Right lobe of liver (tissue), 6 donors: ENCODE measurements at regions of chr7 and their contacts with region 1.

Region 1: GRCh38 chr7:98106647-98107445 is at the start of gene LMTK2:
- DNase-seq: peak; percentile 95 to 96 (median 96)
- ATAC-seq: peak; percentile 98 to 100 (median 99)
- H3K4me3 ChIP-seq: peak within 1 kb of the TSS; percentile 97 to 98 (median 98)
- H3K27ac ChIP-seq: peak within 1 kb of the TSS; percentile 67 to 81 (median 77)
- H3K4me1 ChIP-seq: peaks cover 0 to 29% (median 12%) of the 10 kb centered on the region in 4 donors
- H3K27me3 ChIP-seq: no peaks in the 10 kb centered on the region
- CTCF ChIP-seq: peak; percentile 95 to 98 (median 96)
- POLR2A ChIP-seq: peak; percentile 90
- total RNA-seq, gene LMTK2: 9.4 to 16.7 (median 13.9) TPM

Region 2: DNA sequence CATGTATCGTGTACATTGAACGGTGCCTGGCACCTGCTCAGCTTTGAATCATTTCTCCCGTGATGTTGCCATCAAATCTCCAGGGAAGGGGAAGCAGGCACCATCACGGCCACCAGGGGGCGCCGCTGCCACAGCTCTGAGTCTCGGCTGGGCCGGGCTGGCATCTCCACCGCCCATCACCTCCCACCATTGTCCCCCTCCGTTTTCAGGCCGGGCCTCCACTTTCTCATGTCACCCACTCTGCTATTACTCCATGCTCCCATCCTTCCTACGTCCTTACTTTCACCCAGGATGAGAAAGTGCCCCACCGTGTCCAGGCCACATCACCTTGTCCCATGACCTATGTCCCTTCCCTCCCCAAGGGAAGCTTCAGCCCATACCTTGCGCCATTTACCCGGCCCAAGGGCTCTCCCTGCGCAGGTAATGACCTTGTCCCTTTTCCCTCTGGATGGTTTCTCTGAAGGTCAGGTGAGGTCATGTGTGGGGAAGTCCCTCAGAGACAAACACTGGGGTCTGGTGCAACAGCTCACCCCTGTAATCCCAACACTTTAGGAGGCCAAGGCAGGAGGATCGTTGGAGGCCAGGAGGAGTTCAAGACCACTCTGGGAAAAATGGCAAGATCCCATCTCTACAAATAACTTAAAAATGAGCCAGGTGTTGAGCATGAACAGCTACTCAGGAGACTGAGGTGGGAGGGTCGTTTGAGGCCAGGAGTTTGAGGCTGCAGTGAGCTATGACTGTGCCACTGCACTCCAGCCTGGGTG is 85.1 kb before region 1 on chr7:
- intact Hi-C with region 1: loop called in 1 of 2 experiments (anchors 10 kb)
- DNase-seq: peak; percentile 77 to 81 (median 80)
- ATAC-seq: peak; percentile 93 to 99 (median 97)
- H3K4me3 ChIP-seq: no peak overlapping the region
- H3K27ac ChIP-seq: no peak overlapping the region
- H3K4me1 ChIP-seq: no peaks in the 10 kb centered on the region
- H3K27me3 ChIP-seq: no peaks in the 10 kb centered on the region
- CTCF ChIP-seq: peak; percentile 87 to 98 (median 96)
- POLR2A ChIP-seq: no peak

Region 3: DNA sequence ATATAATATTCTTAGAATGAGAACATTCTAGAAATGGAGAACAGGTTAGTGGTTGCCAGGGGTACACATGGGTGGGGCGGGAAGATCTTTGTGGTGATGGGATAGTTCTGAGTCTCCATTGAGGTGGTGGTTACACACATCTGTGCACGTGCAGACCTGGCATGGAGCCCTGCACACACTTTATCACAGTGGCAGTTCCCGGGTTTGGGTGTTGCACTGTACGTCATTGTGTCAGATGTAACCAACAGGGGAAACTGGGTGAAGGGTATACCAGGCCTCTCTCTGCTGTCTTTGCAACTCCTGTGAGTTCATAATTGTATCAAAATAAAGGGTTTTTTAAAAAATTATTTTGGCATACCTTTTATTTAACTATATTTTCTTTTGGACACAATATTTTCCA is 50.9 kb after region 1 on chr7:
- intact Hi-C with region 1: loop called in 1 of 2 experiments (anchors 10 kb)
- DNase-seq: no peak
- ATAC-seq: no peak
- H3K4me3 ChIP-seq: no peak overlapping the region
- H3K27ac ChIP-seq: no peak overlapping the region
- H3K4me1 ChIP-seq: no peaks in the 10 kb centered on the region
- H3K27me3 ChIP-seq: no peaks in the 10 kb centered on the region
- CTCF ChIP-seq: no peak
- POLR2A ChIP-seq: no peak

Region 4: DNA sequence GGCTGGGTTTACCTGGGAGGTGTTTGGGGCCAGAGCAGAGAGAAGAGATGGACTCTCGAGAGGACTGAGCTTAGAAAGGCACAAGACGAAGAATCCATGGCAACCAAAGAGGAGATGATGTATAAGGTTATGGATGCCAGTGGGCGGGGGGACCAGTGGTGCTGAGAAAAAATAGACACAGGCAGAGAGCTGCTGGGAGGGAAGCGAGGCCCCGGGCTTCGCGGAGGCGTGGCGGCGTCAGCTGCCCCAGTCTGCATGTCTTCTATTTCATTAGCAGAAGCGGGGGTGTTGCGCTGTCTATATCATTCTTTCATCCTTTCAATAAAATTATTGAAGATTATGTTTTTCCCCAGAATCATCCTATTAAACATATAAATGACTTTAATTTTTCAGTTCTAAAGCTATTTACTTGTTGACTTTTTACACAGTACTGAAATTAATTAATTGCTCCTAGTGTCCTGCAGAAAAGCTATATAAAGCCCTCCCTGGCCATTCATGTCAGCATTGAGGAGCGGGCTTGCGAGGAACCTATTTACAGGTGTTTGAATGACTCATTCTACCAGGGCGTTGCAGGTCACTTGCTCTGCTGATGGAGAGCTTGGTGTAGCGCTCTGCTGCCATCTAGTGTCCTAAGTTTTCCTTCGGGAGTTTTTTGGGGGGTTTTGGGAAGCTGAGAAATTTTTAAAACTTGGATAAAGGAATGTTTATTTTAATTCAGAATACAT is 61.5 kb after region 1 on chr7:
- intact Hi-C with region 1: loop called in 1 of 2 experiments (anchors 5 kb)
- DNase-seq: peak in 2 of 3 donors; percentile 50 to 71
- ATAC-seq: peak; percentile 61 to 76 (median 68)
- H3K4me3 ChIP-seq: no peak overlapping the region
- H3K27ac ChIP-seq: no peak overlapping the region
- H3K4me1 ChIP-seq: peaks cover 0 to 37% (median 15%) of the 10 kb centered on the region in 4 donors
- H3K27me3 ChIP-seq: no peaks in the 10 kb centered on the region
- CTCF ChIP-seq: peak; percentile 80 to 88 (median 84)
- POLR2A ChIP-seq: no peak